Aorta (tissue), 5 donors: ENCODE measurements at regions of chr7 and their contacts with region 1.

Region 1: DNA sequence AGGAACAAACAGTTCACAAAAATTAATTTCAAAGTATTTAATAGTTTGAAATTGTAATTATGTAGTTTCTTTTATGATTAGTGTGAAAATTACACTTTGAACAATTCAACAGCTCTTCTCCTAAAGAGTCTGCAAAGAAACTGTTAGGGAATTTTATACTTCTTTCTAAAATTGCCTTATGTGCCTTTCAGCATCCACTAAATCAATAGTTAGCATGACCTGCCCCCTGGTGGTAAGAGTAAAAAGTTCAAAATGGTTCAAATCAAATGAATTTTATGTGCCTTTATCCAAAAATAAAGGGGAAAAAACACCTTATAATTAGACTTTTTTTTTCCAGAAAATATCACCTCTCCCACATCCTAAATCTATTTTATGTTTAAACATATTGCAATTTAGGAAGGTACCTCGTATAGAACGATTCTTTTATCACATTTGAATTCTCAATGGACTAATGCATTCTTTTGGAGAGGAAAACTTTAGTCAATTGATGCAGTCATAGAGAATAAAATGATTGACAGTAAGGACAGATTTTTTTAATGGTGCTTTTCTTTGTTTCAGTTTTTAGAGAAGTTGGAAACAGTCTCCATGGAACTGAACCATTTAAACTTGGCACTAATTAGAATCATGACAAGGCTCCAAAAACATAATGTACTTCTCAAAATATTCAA is 163.7 kb downstream of the SEMA3D start:
- DNase-seq: no peak
- ATAC-seq: no peak
- H3K4me3 ChIP-seq: no peak overlapping the region
- H3K27ac ChIP-seq: no peak overlapping the region
- H3K4me1 ChIP-seq: peaks cover 0 to 5% of the 10 kb centered on the region in 2 donors
- H3K27me3 ChIP-seq: no peaks in the 10 kb centered on the region

Region 2: DNA sequence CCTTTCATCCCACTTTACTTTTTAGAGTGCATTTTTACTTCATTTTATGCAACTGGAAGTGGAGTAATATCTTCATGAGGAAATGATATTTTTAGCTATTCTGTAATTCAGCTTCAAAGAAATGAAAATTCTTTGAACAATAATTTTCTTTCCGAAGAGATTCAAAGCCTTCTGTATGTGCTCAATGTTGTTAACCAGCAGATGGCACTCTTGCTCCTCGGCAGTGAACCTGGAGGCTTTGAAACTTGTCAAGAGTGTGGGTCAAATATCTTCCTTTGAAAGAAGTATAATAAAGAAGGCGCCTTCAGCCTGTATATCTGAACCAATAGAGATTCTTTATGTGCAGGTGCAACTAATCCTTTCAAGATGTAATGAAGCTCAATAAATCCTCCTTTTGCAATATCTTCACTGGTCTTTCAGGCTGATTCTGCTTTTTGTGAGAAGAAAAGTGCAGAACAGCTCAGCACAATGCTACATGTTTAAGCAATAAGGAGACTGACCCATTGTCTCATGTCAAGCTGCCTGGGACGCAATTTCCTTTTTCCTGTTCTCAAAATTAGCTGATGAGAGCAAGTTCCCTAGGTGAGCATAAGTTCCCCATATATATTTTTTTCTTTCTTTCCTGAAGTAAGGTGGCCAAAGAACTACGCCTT is 1087.0 kb before region 1 on chr7:
- intact Hi-C with region 1: loop called in 1 of 2 experiments (anchors 10 kb)
- DNase-seq: peak in 1 of 2 donors; percentile 46
- ATAC-seq: no peak
- H3K4me3 ChIP-seq: no peak overlapping the region
- H3K27ac ChIP-seq: no peak overlapping the region
- H3K4me1 ChIP-seq: no peaks in the 10 kb centered on the region
- H3K27me3 ChIP-seq: no peaks in the 10 kb centered on the region

Region 3: GRCh38 chr7:83976295-83976694 is 1046.9 kb before region 1 on chr7:
- intact Hi-C with region 1: loop called (anchors 5 kb)
- DNase-seq: no peak
- ATAC-seq: no peak
- H3K4me3 ChIP-seq: no peak overlapping the region
- H3K27ac ChIP-seq: no peak overlapping the region
- H3K4me1 ChIP-seq: no peaks in the 10 kb centered on the region
- H3K27me3 ChIP-seq: no peaks in the 10 kb centered on the region

Region 4: DNA sequence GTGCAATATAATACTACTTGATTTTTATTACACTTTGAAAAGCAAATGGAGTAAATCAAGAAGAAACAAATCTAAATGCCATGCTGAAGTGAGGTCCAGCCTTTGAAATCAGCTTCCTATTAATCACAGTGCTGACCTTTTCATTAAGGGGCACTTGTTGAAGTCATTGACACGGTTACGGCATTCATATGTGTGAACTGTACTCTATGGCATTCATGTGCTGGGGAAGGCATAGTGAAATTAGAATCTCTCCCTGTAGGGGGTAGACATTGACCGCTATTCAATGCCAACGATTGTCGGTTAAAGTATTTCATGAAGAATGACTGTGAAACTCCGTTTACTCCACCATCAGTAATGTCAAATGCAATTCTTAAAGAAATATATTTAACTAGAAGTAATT is 532.5 kb before region 1 on chr7:
- intact Hi-C with region 1: loop called (anchors 2 to 5 kb)
- DNase-seq: no peak
- ATAC-seq: no peak
- H3K4me3 ChIP-seq: no peak overlapping the region
- H3K27ac ChIP-seq: no peak overlapping the region
- H3K4me1 ChIP-seq: no peaks in the 10 kb centered on the region
- H3K27me3 ChIP-seq: no peaks in the 10 kb centered on the region

Region 5: GRCh38 chr7:84914598-84914997 is 108.6 kb before region 1 on chr7:
- intact Hi-C with region 1: no loop called
- DNase-seq: no peak
- ATAC-seq: no peak
- H3K4me3 ChIP-seq: no peak overlapping the region
- H3K27ac ChIP-seq: no peak overlapping the region
- H3K4me1 ChIP-seq: peaks cover 0 to under 1% of the 10 kb centered on the region in 2 donors
- H3K27me3 ChIP-seq: no peaks in the 10 kb centered on the region

Region 6: GRCh38 chr7:85135977-85136376 is 112.8 kb after region 1 on chr7:
- intact Hi-C with region 1: no loop called
- DNase-seq: no peak
- ATAC-seq: no peak
- H3K4me3 ChIP-seq: no peak overlapping the region
- H3K27ac ChIP-seq: no peak overlapping the region
- H3K4me1 ChIP-seq: no peaks in the 10 kb centered on the region
- H3K27me3 ChIP-seq: no peaks in the 10 kb centered on the region

Region 7: GRCh38 chr7:85324145-85324799 is 301.1 kb after region 1 on chr7:
- intact Hi-C with region 1: no loop called
- DNase-seq: no peak
- ATAC-seq: no peak
- H3K4me3 ChIP-seq: no peak overlapping the region
- H3K27ac ChIP-seq: no peak overlapping the region
- H3K4me1 ChIP-seq: no peaks in the 10 kb centered on the region
- H3K27me3 ChIP-seq: no peaks in the 10 kb centered on the region